Naive thymus-derived CD4-positive, alpha-beta T cell (primary cell): ENCODE measurements at regions of chr17 and their contacts with region 1.

Region 1: GRCh38 chr17:2282297-2282873 is 21.2 kb downstream of the SMG6 start:
- DNase-seq: peak in 7 of 9 donors; percentile 37 to 68 (median 58)
- ATAC-seq: peak; percentile 76
- H3K4me3 ChIP-seq: no peak overlapping the region
- H3K4me3 Mint-ChIP-seq: peak overlapping the region in 3 of 10 donors; percentile 12 to 64 (median 28)
- H3K27ac ChIP-seq: no peak overlapping the region
- H3K27ac Mint-ChIP-seq: peak overlapping the region; percentile 44 to 89 (median 72)
- H3K4me1 ChIP-seq: peaks cover 0 to 24% of the 10 kb centered on the region in 2 donors
- H3K4me1 Mint-ChIP-seq: peaks cover 21 to 58% (median 35%) of the 10 kb centered on the region in 7 donors
- H3K27me3 ChIP-seq: no peaks in the 10 kb centered on the region
- H3K27me3 Mint-ChIP-seq: no peaks in the 10 kb centered on the region

Region 2: GRCh38 chr17:2192367-2193057 is 89.9 kb before region 1 on chr17:
- CTCF ChIA-PET with region 1: no interaction called
- POLR2A ChIA-PET with region 1: no interaction called
- intact Hi-C with region 1: loop called in 1 of 2 experiments (anchors 1 kb)
- DNase-seq: peak in 7 of 9 donors; percentile 22 to 41 (median 31)
- ATAC-seq: peak; percentile 90
- H3K4me3 ChIP-seq: no peak overlapping the region
- H3K4me3 Mint-ChIP-seq: peak overlapping the region; percentile 30 to 80 (median 58)
- H3K27ac ChIP-seq: peak overlapping the region; percentile 27
- H3K27ac Mint-ChIP-seq: peak overlapping the region in 8 of 9 donors; percentile 22 to 86 (median 82)
- H3K4me1 ChIP-seq: peaks cover 16 to 30% of the 10 kb centered on the region in 2 donors
- H3K4me1 Mint-ChIP-seq: peaks cover 34 to 87% (median 63%) of the 10 kb centered on the region in 7 donors
- H3K27me3 ChIP-seq: no peaks in the 10 kb centered on the region
- H3K27me3 Mint-ChIP-seq: no peaks in the 10 kb centered on the region

Region 3: GRCh38 chr17:2253768-2254406 is 28.5 kb before region 1 on chr17:
- CTCF ChIA-PET with region 1: interaction called, 14 read pairs
- POLR2A ChIA-PET with region 1: interaction called, 14 read pairs
- intact Hi-C with region 1: loop called in 1 of 2 experiments (anchors 1 kb)
- DNase-seq: peak in 6 of 9 donors; percentile 14 to 45 (median 30)
- ATAC-seq: peak; percentile 63
- H3K4me3 ChIP-seq: no peak overlapping the region
- H3K4me3 Mint-ChIP-seq: peak overlapping the region; percentile 27 to 76 (median 58)
- H3K27ac ChIP-seq: no peak overlapping the region
- H3K27ac Mint-ChIP-seq: peak overlapping the region; percentile 81 to 97 (median 93)
- H3K4me1 ChIP-seq: peaks cover 15 to 50% of the 10 kb centered on the region in 2 donors
- H3K4me1 Mint-ChIP-seq: peaks cover 29 to 79% (median 73%) of the 10 kb centered on the region in 7 donors
- H3K27me3 ChIP-seq: no peaks in the 10 kb centered on the region
- H3K27me3 Mint-ChIP-seq: no peaks in the 10 kb centered on the region

Region 4: DNA sequence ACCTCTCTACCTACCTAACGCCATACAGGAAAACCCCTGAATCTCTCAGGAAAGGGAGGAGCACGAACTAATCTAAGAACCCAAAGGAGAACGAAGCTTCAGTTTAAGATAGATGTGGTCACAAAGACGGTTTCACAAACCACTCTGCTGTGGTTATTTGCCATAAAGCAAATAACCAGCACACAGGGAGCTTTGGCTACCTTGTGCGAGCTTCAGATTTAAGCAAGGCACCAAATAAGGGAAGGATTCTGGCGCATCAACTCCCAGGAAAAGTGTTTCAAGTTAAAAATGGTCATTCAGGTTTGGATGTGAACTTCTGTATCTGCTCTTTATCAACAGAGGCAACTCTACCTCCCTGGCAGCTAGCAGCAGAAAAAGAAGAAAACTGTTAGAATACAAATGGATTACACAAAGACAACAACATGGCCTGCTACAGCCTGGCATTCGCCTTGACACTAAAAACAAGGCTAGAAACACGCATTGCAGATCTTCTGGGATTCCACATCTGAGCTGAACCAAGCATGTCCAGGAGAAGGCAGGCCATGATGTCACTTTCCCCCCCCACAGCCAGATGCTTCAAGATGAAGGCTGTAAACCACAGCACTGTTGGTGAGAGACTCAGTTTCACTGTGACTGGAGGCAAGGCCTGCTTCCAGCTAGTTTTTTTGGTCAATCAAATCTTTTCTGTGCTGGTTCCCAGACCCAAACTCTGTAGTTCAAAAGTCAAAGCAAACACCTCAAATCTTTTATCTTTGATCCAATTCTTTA is 22.4 kb before region 1 on chr17:
- CTCF ChIA-PET with region 1: interaction called, 40 read pairs
- POLR2A ChIA-PET with region 1: interaction called, 28 read pairs
- intact Hi-C with region 1: no loop called
- DNase-seq: peak in 8 of 9 donors; percentile 54 to 73 (median 63)
- ATAC-seq: peak; percentile 85
- H3K4me3 ChIP-seq: peak overlapping the region; percentile 36
- H3K4me3 Mint-ChIP-seq: peak overlapping the region; percentile 56 to 86 (median 78)
- H3K27ac ChIP-seq: peak overlapping the region; percentile 83
- H3K27ac Mint-ChIP-seq: peak overlapping the region; percentile 96 to 100 (median 98)
- H3K4me1 ChIP-seq: peaks cover 65 to 72% of the 10 kb centered on the region in 2 donors
- H3K4me1 Mint-ChIP-seq: peaks cover 43 to 80% (median 76%) of the 10 kb centered on the region in 7 donors
- H3K27me3 ChIP-seq: no peaks in the 10 kb centered on the region
- H3K27me3 Mint-ChIP-seq: no peaks in the 10 kb centered on the region

Region 5: DNA sequence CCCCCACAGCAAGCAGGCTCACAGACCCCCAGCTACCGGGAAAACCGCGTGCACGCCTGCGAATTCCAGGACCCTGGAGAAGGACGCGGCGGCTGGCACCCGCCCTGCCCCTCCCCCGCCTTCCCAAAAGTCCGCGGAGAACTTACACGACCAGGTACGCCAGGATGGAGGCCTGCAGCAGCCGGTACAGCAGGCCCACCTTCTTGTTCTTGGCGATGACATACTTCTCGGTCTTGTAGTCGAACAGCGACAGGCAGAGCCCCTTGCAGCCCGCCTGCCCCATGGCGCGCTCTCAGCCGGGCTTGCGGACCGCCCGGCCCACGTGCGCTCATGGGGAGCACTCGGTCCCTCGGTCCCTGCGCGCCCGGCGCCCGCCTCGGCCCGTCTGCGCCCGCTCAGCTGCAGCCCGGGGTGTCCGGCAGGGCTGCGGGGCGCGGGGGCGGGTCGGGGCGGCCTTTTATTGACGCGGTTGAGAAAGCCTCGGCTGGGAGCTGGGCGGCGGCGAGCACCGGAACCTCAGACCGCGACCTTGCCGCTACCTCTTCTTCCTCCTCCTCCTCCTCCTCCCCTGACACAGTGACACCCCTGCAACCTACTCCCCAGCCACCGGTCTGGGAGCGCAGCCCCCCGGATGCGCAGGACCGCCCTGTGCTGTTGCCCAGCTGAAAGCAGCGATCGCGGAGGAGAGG is 1413.5 kb after region 1 on chr17 and contains the start of gene P2RX5:
- CTCF ChIA-PET with region 1: no interaction called
- POLR2A ChIA-PET with region 1: no interaction called
- intact Hi-C with region 1: no loop called
- DNase-seq: peak in 8 of 9 donors; percentile 24 to 59 (median 35)
- ATAC-seq: peak; percentile 71
- H3K4me3 ChIP-seq: peak within 1 kb of the TSS; percentile 82
- H3K4me3 Mint-ChIP-seq: peak within 1 kb of the TSS; percentile 87 to 98 (median 94)
- H3K27ac ChIP-seq: peak within 1 kb of the TSS; percentile 61
- H3K27ac Mint-ChIP-seq: peak within 1 kb of the TSS in 8 of 9 donors; percentile 67 to 95 (median 86)
- H3K4me1 ChIP-seq: peaks cover 3 to 9% of the 10 kb centered on the region in 2 donors
- H3K4me1 Mint-ChIP-seq: peaks cover 5 to 39% (median 16%) of the 10 kb centered on the region in 7 donors
- H3K27me3 ChIP-seq: no peaks in the 10 kb centered on the region
- H3K27me3 Mint-ChIP-seq: no peaks in the 10 kb centered on the region
- total RNA-seq, gene P2RX5: 10.7 to 94.5 (median 24.6) TPM